ENCODE measurements at regions of chr17 and their contacts with region 1.

Region 1: GRCh38 chr17:8189711-8190477 is at the start of gene BORCS6:
- DNase-seq: peak; percentile 92 to 99 (median 98)
- ATAC-seq: peak; percentile 75
- H3K4me3 ChIP-seq: peak within 1 kb of the TSS; percentile 83 to 84
- H3K27ac ChIP-seq: peak within 1 kb of the TSS; percentile 97
- H3K4me1 ChIP-seq: peaks cover 14 to 65% of the 10 kb centered on the region in 2 donors
- H3K27me3 ChIP-seq: no peaks in the 10 kb centered on the region
- CTCF ChIP-seq: peak in 1 of 2 donors; percentile 5
- polyA plus RNA-seq, gene BORCS6: 2.4 to 4.1 (median 3.2) TPM

Region 2: GRCh38 chr17:8119581-8120519 is 70.0 kb before region 1 on chr17:
- intact Hi-C with region 1: loop called in 1 of 2 experiments (anchors 10 kb)
- DNase-seq: peak in 3 of 4 donors; percentile 77 to 95 (median 92)
- ATAC-seq: peak; percentile 59
- H3K4me3 ChIP-seq: peak overlapping the region; percentile 52 to 54
- H3K27ac ChIP-seq: peak overlapping the region; percentile 70 to 85
- H3K4me1 ChIP-seq: peaks cover 35 to 76% of the 10 kb centered on the region in 2 donors
- H3K27me3 ChIP-seq: peaks cover 48 to 85% of the 10 kb centered on the region in 2 donors
- CTCF ChIP-seq: no peak

Region 3: GRCh38 chr17:8222630-8223356 is 32.9 kb after region 1 on chr17:
- intact Hi-C with region 1: loop called in 1 of 2 experiments (anchors 5 kb)
- DNase-seq: peak; percentile 93 to 97 (median 96)
- ATAC-seq: peak; percentile 73
- H3K4me3 ChIP-seq: peak overlapping the region; percentile 59 to 68
- H3K27ac ChIP-seq: peak overlapping the region; percentile 97 to 99
- H3K4me1 ChIP-seq: peaks cover 14 to 33% of the 10 kb centered on the region in 2 donors
- H3K27me3 ChIP-seq: no peaks in the 10 kb centered on the region
- CTCF ChIP-seq: no peak